Activated naive CD4-positive, alpha-beta T cell treated with anti-CD3 and anti-CD28 coated beads for 36 hours (primary cell): ENCODE measurements at regions of chr6 and their contacts with region 1.

Region 1: DNA sequence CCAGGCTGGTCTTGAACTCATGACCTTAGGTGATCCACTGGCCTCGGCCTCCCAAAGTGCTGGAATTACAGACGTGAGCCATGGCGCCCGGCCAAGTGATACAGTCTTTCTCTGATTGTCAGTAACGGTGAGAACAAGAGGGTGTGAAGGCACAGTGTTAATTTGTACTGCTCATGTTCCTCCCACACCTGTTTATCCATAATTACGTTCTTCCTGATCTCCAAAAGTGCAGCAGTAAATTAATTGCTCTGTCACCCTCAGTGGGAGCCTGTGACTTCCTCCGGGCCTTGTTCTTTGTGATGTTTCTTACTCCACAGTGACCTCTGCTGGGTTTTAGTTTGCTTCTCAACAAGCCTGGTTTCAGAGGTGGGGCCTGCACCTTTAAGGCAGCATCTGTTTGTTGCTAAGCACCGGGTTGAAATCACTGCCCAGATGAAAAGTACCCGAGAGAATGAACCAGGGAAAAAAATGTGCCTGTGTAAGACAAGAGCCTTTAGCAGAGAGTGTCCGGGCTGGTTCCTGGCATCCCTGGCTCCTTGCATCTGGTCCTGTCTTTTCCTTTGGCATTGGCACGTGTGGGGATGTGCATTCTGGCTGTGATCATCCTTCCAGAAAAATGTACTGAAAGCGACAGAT is 89.1 kb upstream of the CLDN20 start:
- DNase-seq: peak; percentile 81
- H3K4me3 Mint-ChIP-seq: no peak overlapping the region
- H3K27ac Mint-ChIP-seq: no peak overlapping the region
- H3K4me1 Mint-ChIP-seq: peaks cover 48% of the 10 kb centered on the region
- H3K27me3 Mint-ChIP-seq: no peaks in the 10 kb centered on the region

Region 2: GRCh38 chr6:154352898-154353585 is 821.7 kb before region 1 on chr6:
- CTCF ChIA-PET with region 1: no interaction called
- intact Hi-C with region 1: loop called (anchors 1 kb)
- DNase-seq: peak; percentile 83
- H3K4me3 Mint-ChIP-seq: no peak overlapping the region
- H3K27ac Mint-ChIP-seq: no peak overlapping the region
- H3K4me1 Mint-ChIP-seq: peaks cover 38% of the 10 kb centered on the region
- H3K27me3 Mint-ChIP-seq: peaks cover 25% of the 10 kb centered on the region

Region 3: DNA sequence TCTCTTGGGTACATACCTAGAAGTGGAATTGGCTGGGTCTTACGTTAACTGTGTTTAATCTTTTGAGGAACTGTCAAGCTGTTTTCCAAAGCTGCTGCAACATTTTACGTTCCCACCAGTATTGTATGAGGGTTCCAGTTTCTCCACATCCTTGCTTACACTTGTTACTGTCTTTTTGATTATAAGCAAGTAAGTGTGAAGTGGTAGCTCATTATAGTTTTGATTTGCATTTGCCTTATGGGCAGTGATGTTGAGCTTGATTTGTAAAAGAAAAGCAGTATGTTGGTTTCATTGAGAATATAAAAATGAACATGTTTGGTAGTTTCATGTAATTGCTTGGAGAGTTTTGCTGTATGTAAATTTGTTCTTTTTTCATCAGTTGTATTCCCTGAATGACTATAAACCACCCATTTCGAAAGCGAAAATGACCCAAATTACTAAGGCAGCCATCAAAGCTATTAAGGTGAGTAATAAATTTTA is 401.0 kb before region 1 on chr6:
- CTCF ChIA-PET with region 1: interaction called, 3 read pairs
- intact Hi-C with region 1: loop called (anchors 1 kb)
- DNase-seq: peak; percentile 19
- H3K4me3 Mint-ChIP-seq: no peak overlapping the region
- H3K27ac Mint-ChIP-seq: peak overlapping the region; percentile 70
- H3K4me1 Mint-ChIP-seq: peaks cover 43% of the 10 kb centered on the region
- H3K27me3 Mint-ChIP-seq: no peaks in the 10 kb centered on the region

Region 4: DNA sequence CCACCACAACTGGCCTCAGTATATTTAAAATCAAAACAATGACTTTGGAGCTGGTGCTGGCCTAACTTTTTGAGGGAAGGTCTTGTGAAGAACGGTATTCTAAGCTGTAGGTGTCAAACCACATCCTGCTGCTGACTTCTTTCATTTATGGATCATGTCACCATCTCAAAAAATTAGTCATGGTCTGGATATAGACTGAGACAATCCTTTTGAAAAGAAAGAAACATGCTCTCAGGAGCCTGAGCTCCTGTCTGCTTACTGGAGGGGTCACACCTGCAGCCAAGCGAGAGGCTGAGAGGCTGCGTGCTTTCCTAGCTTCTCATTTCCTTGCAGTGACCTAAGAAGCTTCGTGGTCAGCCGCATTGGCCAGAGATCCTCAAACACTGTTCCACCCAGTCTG is 124.4 kb before region 1 on chr6:
- CTCF ChIA-PET with region 1: no interaction called
- intact Hi-C with region 1: loop called (anchors 1 kb)
- DNase-seq: peak; percentile 63
- H3K4me3 Mint-ChIP-seq: no peak overlapping the region
- H3K27ac Mint-ChIP-seq: peak overlapping the region; percentile 79
- H3K4me1 Mint-ChIP-seq: peaks cover 25% of the 10 kb centered on the region
- H3K27me3 Mint-ChIP-seq: peaks cover 8% of the 10 kb centered on the region

Region 5: DNA sequence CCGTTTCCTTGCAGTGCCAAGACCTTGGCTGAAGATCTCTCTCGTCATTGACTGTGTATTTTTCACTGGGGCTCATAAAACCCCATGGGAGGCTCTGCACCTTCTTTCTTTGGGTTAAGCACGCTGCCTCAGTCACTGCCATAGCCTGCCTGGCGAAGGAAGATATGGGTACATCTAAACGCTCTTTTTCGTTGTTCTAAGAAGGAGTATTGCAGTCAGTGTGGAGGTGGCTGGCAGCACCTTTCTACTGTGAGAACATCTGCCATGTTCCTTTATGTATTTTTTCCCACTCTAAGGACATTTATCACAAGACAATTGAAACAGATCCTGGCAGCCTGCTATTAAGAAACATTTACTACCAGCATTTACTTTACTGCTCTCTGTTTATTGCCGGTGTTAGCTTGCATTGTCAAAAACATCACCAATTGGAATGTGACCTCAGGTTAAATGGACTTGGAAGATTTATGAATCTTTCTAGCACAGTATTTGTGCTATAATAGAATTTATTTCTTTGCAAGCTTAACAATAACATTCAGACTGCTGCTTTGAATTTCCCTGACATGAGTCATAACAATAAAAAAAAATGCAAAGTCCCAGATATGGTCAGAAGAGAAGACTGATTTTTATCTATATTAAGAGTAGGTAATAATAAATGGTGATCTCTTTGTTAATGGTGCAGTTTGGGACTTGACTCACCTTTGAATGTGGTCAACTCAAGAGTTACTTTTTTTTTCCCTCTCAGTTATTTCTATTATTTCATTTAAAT is 26.9 kb after region 1 on chr6:
- CTCF ChIA-PET with region 1: no interaction called
- intact Hi-C with region 1: no loop called
- DNase-seq: no peak
- H3K4me3 Mint-ChIP-seq: no peak overlapping the region
- H3K27ac Mint-ChIP-seq: no peak overlapping the region
- H3K4me1 Mint-ChIP-seq: peaks cover 2% of the 10 kb centered on the region
- H3K27me3 Mint-ChIP-seq: peaks cover 4% of the 10 kb centered on the region

Region 6: GRCh38 chr6:155223646-155224451 is 49.2 kb after region 1 on chr6:
- CTCF ChIA-PET with region 1: interaction called, 3 read pairs
- intact Hi-C with region 1: loop called (anchors 1 kb)
- DNase-seq: peak; percentile 82
- H3K4me3 Mint-ChIP-seq: no peak overlapping the region
- H3K27ac Mint-ChIP-seq: peak overlapping the region; percentile 74
- H3K4me1 Mint-ChIP-seq: peaks cover 25% of the 10 kb centered on the region
- H3K27me3 Mint-ChIP-seq: peaks cover 18% of the 10 kb centered on the region

Region 7: GRCh38 chr6:155418017-155418761 is 243.5 kb after region 1 on chr6:
- CTCF ChIA-PET with region 1: interaction called, 3 read pairs
- intact Hi-C with region 1: loop called (anchors 1 kb)
- DNase-seq: peak; percentile 87
- H3K4me3 Mint-ChIP-seq: peak overlapping the region; percentile 55
- H3K27ac Mint-ChIP-seq: peak overlapping the region; percentile 96
- H3K4me1 Mint-ChIP-seq: peaks cover 43% of the 10 kb centered on the region
- H3K27me3 Mint-ChIP-seq: no peaks in the 10 kb centered on the region

Region 8: GRCh38 chr6:156013155-156013554 is 838.5 kb after region 1 on chr6:
- CTCF ChIA-PET with region 1: no interaction called
- intact Hi-C with region 1: no loop called
- DNase-seq: peak; percentile 31
- H3K4me3 Mint-ChIP-seq: peak overlapping the region; percentile 20
- H3K27ac Mint-ChIP-seq: no peak overlapping the region
- H3K4me1 Mint-ChIP-seq: peaks cover 30% of the 10 kb centered on the region
- H3K27me3 Mint-ChIP-seq: no peaks in the 10 kb centered on the region